ENCODE measurements at regions of chr18 and their contacts with region 1.

Region 1: DNA sequence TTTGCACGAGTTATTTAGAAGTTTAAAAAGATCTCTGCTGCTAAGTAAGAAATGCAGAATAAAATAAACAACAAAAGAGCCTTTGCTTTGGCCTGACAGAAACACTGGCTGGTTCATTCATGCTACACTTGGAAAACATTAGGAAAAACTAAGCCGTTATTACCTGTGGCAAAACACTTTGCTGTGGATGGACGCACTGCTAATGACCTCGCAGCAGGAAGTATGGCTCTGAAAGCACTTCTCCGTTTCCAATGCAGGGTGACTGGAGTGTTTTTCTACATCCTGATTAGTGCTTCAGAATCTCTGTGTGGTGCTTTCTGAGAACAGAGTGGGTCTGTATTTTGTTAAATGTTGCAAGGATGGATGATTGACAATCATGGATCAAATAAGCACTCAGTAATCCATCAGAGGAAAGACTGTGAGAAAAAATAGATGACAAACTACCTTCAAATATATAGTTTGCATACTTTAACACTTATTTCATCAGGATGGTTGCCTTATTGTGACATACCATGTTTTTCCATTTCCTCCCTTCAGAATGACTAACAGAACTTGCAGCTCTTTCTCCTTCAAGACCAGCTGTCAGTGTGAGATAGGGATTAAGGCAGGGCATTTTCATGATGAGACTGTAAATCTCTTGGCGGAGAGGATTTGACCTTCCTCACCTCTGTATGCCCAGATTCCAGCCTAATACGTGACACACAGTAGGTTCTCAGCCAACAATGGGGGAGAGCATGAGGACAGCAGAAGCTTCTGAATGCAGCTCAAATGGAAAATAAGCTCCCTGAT is 38.0 kb downstream of the LINC00305 start:
- DNase-seq: no peak
- H3K4me3 ChIP-seq: no peak overlapping the region
- H3K27ac ChIP-seq: no peak overlapping the region
- H3K4me1 ChIP-seq: no peaks in the 10 kb centered on the region
- H3K27me3 ChIP-seq: no peaks in the 10 kb centered on the region
- CTCF ChIP-seq: no peak
- EP300 ChIP-seq: no peak
- POLR2A ChIP-seq: no peak

Region 2: GRCh38 chr18:63495675-63496074 is 615.2 kb before region 1 on chr18:
- in situ Hi-C with region 1: no loop called
- intact Hi-C with region 1: no loop called
- DNase-seq: no peak
- H3K4me3 ChIP-seq: no peak overlapping the region
- H3K27ac ChIP-seq: no peak overlapping the region
- H3K4me1 ChIP-seq: no peaks in the 10 kb centered on the region
- H3K27me3 ChIP-seq: no peaks in the 10 kb centered on the region
- CTCF ChIP-seq: no peak
- EP300 ChIP-seq: no peak
- POLR2A ChIP-seq: no peak

Region 3: DNA sequence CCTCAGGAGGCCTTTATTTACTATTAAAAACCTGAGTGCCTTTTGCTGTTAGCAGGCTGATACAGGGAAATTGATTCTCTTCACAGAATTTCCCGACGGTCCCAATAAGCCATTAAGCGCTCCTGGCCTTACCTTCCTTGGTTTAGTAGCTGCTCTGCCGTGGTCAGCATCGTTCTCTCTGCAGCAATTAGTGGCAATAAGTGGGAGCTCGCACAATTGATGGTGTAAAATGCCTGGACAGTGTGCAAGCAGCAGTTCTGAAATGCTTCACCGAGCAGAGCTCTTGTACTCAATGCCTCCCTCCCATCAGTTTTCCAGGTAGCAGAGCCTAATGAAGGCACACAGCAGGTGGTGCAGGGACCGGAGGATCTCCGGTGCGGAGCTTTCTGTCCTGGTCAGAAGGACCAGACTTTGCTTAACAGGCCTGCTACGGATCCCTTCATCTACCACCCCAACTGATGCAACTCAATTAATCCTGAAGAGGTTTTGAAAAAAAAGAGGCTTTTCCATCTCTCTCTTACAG is 39.1 kb after region 1 on chr18:
- in situ Hi-C with region 1: no loop called
- intact Hi-C with region 1: no loop called
- DNase-seq: no peak
- H3K4me3 ChIP-seq: no peak overlapping the region
- H3K27ac ChIP-seq: no peak overlapping the region
- H3K4me1 ChIP-seq: no peaks in the 10 kb centered on the region
- H3K27me3 ChIP-seq: no peaks in the 10 kb centered on the region
- CTCF ChIP-seq: no peak
- EP300 ChIP-seq: no peak
- POLR2A ChIP-seq: no peak

Region 4: GRCh38 chr18:64244571-64244970 is 133.7 kb after region 1 on chr18:
- in situ Hi-C with region 1: no loop called
- intact Hi-C with region 1: no loop called
- DNase-seq: no peak
- H3K4me3 ChIP-seq: no peak overlapping the region
- H3K27ac ChIP-seq: no peak overlapping the region
- H3K4me1 ChIP-seq: no peaks in the 10 kb centered on the region
- H3K27me3 ChIP-seq: no peaks in the 10 kb centered on the region
- CTCF ChIP-seq: no peak
- EP300 ChIP-seq: no peak
- POLR2A ChIP-seq: no peak

Region 5: DNA sequence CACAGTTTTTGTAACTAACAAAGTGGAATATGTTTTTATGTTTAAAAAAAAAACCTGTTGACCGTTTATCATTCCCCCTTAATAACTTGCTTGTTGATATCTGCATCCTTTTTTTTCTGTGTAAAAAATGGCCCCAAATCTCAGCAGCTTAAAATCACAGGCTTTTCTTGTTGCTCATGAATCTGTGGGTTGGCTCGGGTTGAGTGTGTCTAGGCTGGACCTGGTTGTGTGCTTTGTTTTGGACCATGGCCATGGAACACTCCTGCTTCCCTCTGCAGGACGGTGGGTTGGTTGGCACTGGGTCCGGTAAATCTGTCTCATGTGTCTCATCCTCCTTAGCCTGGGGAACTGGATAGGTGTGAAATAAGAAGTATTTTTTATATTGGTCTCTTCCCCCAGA is 177.0 kb after region 1 on chr18:
- in situ Hi-C with region 1: no loop called
- intact Hi-C with region 1: loop called (anchors 5 kb)
- DNase-seq: no peak
- H3K4me3 ChIP-seq: no peak overlapping the region
- H3K27ac ChIP-seq: no peak overlapping the region
- H3K4me1 ChIP-seq: no peaks in the 10 kb centered on the region
- H3K27me3 ChIP-seq: no peaks in the 10 kb centered on the region
- CTCF ChIP-seq: no peak
- EP300 ChIP-seq: no peak
- POLR2A ChIP-seq: no peak